ENCODE measurements at regions of chr1 and their contacts with region 1.

Region 1: DNA sequence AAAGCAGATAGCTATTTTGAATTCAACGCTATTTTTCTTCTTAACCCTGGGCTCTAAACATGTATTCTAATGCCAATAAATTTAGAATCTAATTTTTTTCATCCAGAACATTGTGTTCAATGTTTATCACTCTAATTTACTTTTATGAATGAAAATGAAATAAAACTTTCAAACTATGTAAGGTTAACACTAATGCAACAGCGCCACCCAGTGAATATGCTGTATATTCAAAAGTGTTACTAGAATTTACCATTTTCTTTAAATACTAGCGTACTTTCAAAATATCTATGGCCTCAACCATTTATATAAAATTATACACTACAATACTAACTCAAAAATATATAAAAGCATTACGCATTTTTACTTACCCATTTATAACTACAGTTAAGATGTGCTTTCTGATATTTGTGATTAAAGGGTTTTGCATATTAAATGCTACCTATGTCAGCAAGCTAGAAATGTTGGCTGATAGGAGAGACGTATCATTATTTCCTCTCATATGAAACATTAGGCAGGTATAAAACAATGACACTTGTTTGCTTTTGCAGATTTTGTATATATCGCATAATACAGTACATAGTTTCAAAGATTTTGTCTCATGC is 5.9 kb upstream of the NUF2 start:
- DNase-seq: peak; percentile 10
- H3K4me3 ChIP-seq: no peak overlapping the region
- H3K27ac ChIP-seq: no peak overlapping the region
- H3K4me1 ChIP-seq: peaks cover 7% of the 10 kb centered on the region
- H3K27me3 ChIP-seq: no peaks in the 10 kb centered on the region
- CTCF ChIP-seq: peak; percentile 56 to 63

Region 2: GRCh38 chr1:163174524-163175437 is 141.1 kb before region 1 on chr1:
- CTCF ChIA-PET with region 1: no interaction called
- dilution Hi-C with region 1: no loop called
- in situ Hi-C with region 1: no loop called
- intact Hi-C with region 1: loop called (anchors 1 kb)
- DNase-seq: peak; percentile 20
- H3K4me3 ChIP-seq: no peak overlapping the region
- H3K27ac ChIP-seq: no peak overlapping the region
- H3K4me1 ChIP-seq: no peaks in the 10 kb centered on the region
- H3K27me3 ChIP-seq: no peaks in the 10 kb centered on the region
- CTCF ChIP-seq: peak; percentile 78 to 92

Region 3: GRCh38 chr1:163258181-163258580 is 57.7 kb before region 1 on chr1:
- CTCF ChIA-PET with region 1: no interaction called
- dilution Hi-C with region 1: no loop called
- in situ Hi-C with region 1: no loop called
- intact Hi-C with region 1: no loop called
- DNase-seq: peak; percentile 46
- H3K4me3 ChIP-seq: no peak overlapping the region
- H3K27ac ChIP-seq: no peak overlapping the region
- H3K4me1 ChIP-seq: peaks cover 13% of the 10 kb centered on the region
- H3K27me3 ChIP-seq: no peaks in the 10 kb centered on the region
- CTCF ChIP-seq: no peak

Region 4: DNA sequence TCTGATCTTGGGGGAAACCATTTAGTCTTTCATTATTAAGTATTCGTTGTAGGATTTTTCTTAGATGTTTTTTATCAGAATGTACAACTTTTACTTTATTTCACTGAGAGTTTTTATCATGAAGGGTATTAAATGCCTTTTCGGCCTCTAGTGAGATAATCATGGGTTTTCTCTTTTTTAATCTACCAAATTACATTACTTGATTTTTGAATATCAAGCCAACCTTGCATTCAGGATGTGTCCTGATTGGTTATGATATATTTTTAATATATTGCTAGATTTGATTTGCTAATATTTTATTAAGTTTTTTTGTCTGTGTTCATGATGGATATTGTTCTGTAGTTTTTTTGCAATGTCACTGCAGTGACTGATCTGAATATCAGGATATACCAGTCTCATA is 15.2 kb after region 1 on chr1:
- CTCF ChIA-PET with region 1: no interaction called
- dilution Hi-C with region 1: no loop called
- in situ Hi-C with region 1: no loop called
- intact Hi-C with region 1: no loop called
- DNase-seq: no peak
- H3K4me3 ChIP-seq: no peak overlapping the region
- H3K27ac ChIP-seq: no peak overlapping the region
- H3K4me1 ChIP-seq: no peaks in the 10 kb centered on the region
- H3K27me3 ChIP-seq: no peaks in the 10 kb centered on the region
- CTCF ChIP-seq: no peak

Region 5: GRCh38 chr1:163381487-163382184 is 65.8 kb after region 1 on chr1:
- CTCF ChIA-PET with region 1: no interaction called
- dilution Hi-C with region 1: no loop called
- in situ Hi-C with region 1: no loop called
- intact Hi-C with region 1: no loop called
- DNase-seq: no peak
- H3K4me3 ChIP-seq: no peak overlapping the region
- H3K27ac ChIP-seq: no peak overlapping the region
- H3K4me1 ChIP-seq: no peaks in the 10 kb centered on the region
- H3K27me3 ChIP-seq: no peaks in the 10 kb centered on the region
- CTCF ChIP-seq: no peak

Region 6: GRCh38 chr1:163664671-163665335 is 348.9 kb after region 1 on chr1:
- CTCF ChIA-PET with region 1: no interaction called
- dilution Hi-C with region 1: no loop called
- in situ Hi-C with region 1: no loop called
- intact Hi-C with region 1: no loop called
- DNase-seq: no peak
- H3K4me3 ChIP-seq: no peak overlapping the region
- H3K27ac ChIP-seq: no peak overlapping the region
- H3K4me1 ChIP-seq: no peaks in the 10 kb centered on the region
- H3K27me3 ChIP-seq: peaks cover 2% of the 10 kb centered on the region
- CTCF ChIP-seq: no peak

Measured in mammary epithelial cell (primary cell).